ENCODE measurements at regions of chr18 and their contacts with region 1.

Region 1: DNA sequence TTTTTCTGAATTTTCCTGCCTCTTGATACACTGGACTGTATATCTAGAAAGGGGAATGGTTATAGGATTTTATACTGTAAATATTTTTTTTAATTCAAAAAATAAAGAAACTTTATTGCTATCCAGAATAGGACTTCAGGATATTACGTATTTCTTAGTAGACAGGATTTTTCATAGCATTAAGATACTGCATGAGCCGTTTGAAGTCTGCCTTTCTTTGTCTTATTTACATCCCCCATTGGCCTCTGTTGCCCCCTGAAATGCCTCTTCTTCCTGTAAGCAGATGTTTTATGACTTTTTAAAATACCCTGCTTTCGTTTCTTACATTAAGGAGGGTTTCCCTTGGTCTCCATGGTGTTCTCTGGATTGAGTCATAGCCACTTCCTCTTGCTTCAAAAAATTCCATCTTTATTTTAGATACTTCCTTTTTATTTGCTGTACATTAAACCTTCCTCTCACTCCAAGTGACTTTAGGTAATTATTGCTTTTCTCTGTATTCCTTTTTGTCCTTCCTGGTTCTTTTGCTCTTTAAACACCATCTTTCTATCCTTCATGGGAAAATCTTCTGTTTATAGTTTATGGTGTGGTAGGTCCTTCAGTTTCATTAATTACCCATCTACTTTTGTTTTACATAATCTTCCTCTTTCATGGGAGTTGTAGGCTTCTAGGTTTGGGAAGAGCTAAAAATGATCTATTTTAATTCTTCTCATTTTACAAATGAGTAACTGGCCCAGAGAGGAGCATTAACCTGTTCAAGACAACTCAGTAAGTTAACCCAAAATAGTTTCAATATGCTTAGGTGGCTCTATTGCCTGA is 72.6 kb downstream of the ZNF532 start:
- DNase-seq: no peak
- H3K4me3 ChIP-seq: no peak overlapping the region
- H3K27ac ChIP-seq: no peak overlapping the region
- H3K4me1 ChIP-seq: no peaks in the 10 kb centered on the region
- H3K27me3 ChIP-seq: no peaks in the 10 kb centered on the region
- CTCF ChIP-seq: no peak
- POLR2A ChIP-seq: no peak

Region 2: DNA sequence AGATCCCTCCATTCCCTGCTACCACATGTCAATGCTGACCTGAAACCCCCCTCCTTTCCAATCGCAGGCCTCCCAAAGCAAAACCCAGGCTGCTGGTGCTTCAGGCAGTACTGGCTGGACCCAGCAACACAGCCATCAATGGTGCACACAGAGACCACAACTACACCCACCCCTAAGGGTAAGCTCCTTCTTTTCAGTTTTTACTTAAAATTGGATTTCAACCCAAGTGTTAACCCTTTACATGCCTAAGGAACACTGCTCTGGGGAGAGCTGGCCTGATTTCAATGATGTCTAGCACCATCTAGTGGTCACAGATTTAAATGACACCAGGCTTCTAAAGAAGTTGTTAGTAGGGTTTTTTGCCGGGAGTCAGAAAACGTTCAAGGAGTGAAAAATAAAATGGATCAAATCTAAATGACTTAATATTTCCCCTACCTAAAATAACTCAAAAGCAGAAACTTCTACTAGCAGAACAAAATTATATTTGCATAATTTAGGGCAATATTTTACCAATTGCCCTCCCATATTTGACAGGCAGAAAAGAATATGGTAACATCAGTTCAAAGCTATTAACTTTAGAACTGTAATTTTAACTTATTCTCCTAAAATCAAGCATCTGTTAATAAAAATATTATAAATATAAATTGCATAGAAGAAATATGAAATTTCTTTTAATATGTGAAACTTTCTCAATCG is 1375.4 kb before region 1 on chr18:
- intact Hi-C with region 1: loop called (anchors 10 kb)
- DNase-seq: no peak
- H3K4me3 ChIP-seq: no peak overlapping the region
- H3K27ac ChIP-seq: no peak overlapping the region
- H3K4me1 ChIP-seq: no peaks in the 10 kb centered on the region
- H3K27me3 ChIP-seq: no peaks in the 10 kb centered on the region
- CTCF ChIP-seq: peak; percentile 54 to 65 (median 64)
- POLR2A ChIP-seq: no peak

Region 3: GRCh38 chr18:58525517-58525916 is 411.8 kb before region 1 on chr18:
- intact Hi-C with region 1: no loop called
- DNase-seq: no peak
- H3K4me3 ChIP-seq: no peak overlapping the region
- H3K27ac ChIP-seq: no peak overlapping the region
- H3K4me1 ChIP-seq: no peaks in the 10 kb centered on the region
- H3K27me3 ChIP-seq: no peaks in the 10 kb centered on the region
- CTCF ChIP-seq: no peak
- POLR2A ChIP-seq: no peak

Region 4: GRCh38 chr18:58955738-58956137 is 18.5 kb after region 1 on chr18:
- intact Hi-C with region 1: loop called (anchors 1 kb)
- DNase-seq: no peak
- H3K4me3 ChIP-seq: no peak overlapping the region
- H3K27ac ChIP-seq: no peak overlapping the region
- H3K4me1 ChIP-seq: no peaks in the 10 kb centered on the region
- H3K27me3 ChIP-seq: no peaks in the 10 kb centered on the region
- CTCF ChIP-seq: no peak
- POLR2A ChIP-seq: no peak